MCF 10A (cell line): ENCODE measurements at regions of chr10 and their contacts with region 1.

Region 1: GRCh38 chr10:77943121-77943901 is 16.8 kb upstream of the DLG5 start:
- DNase-seq: peak; percentile 90
- H3K4me3 Mint-ChIP-seq: peak overlapping the region; percentile 50
- H3K27ac Mint-ChIP-seq: peak overlapping the region; percentile 95
- H3K4me1 Mint-ChIP-seq: peaks cover 43% of the 10 kb centered on the region
- H3K27me3 Mint-ChIP-seq: no peaks in the 10 kb centered on the region
- CTCF ChIP-seq: no peak

Region 2: DNA sequence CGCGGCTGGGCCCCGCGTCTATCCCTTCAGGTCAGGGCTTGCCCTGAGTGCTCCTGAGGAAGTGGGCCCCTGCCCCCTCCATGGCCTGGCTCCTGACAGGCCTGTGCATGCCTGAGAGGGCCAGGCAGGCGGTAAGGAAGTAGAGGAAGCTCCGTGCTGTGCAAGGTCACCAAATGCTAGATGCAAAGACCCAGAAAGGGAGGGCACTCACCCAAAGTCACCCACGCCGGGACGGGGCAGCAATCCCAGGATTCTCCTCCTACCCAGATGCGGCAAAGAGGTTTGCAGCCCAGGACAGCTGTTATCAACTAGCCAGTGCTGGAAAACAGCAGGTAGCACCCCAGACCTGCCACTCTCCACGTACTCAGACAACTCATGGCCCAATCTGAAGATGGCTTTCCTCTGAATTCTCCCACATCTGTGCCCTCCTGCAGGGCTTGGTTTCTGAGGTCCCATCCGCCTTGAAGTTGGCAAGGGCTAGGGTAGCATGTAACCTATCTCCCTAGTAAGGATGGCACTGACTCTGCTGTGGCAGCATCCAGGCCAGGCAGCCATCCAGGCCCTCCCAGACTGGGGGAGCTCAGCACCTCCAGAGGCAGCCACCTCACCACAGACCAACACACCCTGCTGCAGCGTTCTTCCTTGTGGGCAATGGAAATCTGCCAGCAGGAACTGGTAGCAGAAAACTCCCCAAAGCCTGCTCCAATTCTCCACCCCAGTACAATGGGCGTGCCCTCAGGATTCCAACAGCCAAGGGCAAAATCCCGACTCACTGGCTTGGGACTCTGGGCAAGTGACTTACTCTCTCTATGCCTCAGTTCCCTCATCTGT is 44.4 kb before region 1 on chr10:
- CTCF ChIA-PET with region 1: no interaction called
- POLR2A ChIA-PET with region 1: interaction called, 16 read pairs
- intact Hi-C with region 1: no loop called
- DNase-seq: peak; percentile 97
- H3K4me3 Mint-ChIP-seq: peak overlapping the region; percentile 75
- H3K27ac Mint-ChIP-seq: peak overlapping the region; percentile 87
- H3K4me1 Mint-ChIP-seq: peaks cover 55% of the 10 kb centered on the region
- H3K27me3 Mint-ChIP-seq: no peaks in the 10 kb centered on the region
- CTCF ChIP-seq: no peak